OCI-LY7 (cell line): ENCODE measurements at regions of chr15 and their contacts with region 1.

Region 1: GRCh38 chr15:89358755-89359439 is 24.3 kb upstream of the POLG start:
- DNase-seq: peak; percentile 80
- H3K4me3 ChIP-seq: peak overlapping the region; percentile 67
- H3K27ac ChIP-seq: no peak overlapping the region
- H3K4me1 ChIP-seq: peaks cover 3% of the 10 kb centered on the region
- CTCF ChIP-seq: peak; percentile 97

Region 2: DNA sequence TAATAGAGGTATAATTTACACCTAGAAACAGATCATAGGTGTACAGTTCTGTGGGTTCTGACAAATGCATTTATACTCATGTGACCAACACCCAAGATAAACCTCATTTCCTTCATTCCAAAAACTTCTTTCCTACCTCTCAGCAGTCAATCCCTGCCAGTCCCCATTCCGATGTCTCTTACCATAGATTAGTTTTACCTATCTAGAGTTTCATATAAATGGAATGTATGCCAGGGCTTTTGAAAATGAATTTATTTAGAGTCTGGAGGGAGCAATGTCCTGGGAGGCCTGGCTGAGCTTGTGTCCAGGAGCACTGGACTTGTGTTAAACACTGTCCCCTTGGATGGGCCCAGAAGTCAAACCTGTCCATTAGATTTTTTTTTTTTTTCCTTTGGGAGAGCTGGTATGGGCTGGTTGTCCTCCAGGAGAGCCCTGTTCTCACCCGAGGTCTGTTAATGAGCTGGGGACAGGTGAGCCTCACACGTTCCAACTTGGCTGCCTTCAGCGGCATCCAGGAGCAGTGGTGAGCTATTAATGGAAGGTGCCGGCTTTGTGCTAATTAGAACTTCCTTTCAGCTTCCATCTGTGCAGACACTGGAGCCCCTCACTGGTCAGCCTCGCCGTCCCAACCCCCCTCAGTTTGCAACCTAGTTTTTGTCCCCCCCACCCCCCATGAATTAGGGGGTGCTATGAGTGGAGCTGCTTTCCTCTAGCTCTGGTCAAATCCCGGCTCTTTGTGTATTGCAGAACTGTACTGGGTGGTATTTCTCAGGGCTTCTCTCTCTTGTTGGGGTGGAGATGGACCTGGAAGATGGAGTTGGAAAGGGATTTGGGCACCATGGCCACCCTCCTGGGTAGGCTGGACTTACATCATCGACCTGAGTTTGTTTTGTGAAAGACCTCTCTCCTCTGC is 16.5 kb after region 1 on chr15:
- CTCF ChIA-PET with region 1: interaction called, 10 read pairs
- POLR2A ChIA-PET with region 1: interaction called, 4 read pairs
- intact Hi-C with region 1: no loop called
- DNase-seq: no peak
- H3K4me3 ChIP-seq: no peak overlapping the region
- H3K27ac ChIP-seq: no peak overlapping the region
- H3K4me1 ChIP-seq: no peaks in the 10 kb centered on the region
- CTCF ChIP-seq: no peak